Endothelial cell of umbilical vein (primary cell): ENCODE measurements at regions of chr12 and their contacts with region 1.

Region 1: GRCh38 chr12:49358483-49359141 is 8.7 kb upstream of the SPATS2 start:
- DNase-seq: peak; percentile 82
- H3K4me3 ChIP-seq: no peak overlapping the region
- H3K27ac ChIP-seq: no peak overlapping the region
- H3K4me1 ChIP-seq: no peaks in the 10 kb centered on the region
- H3K27me3 ChIP-seq: no peaks in the 10 kb centered on the region
- CTCF ChIP-seq: peak; percentile 74 to 76
- POLR2A ChIP-seq: no peak

Region 2: GRCh38 chr12:49288412-49288853 is 70.2 kb before region 1 on chr12:
- CTCF ChIA-PET with region 1: interaction called, 173 read pairs
- POLR2A ChIA-PET with region 1: no interaction called
- dilution Hi-C with region 1: no loop called
- intact Hi-C with region 1: loop called (anchors 1 kb)
- DNase-seq: peak; percentile 57
- H3K4me3 ChIP-seq: no peak overlapping the region
- H3K27ac ChIP-seq: no peak overlapping the region
- H3K4me1 ChIP-seq: peaks cover 2% of the 10 kb centered on the region
- H3K27me3 ChIP-seq: peaks cover 4 to 9% of the 10 kb centered on the region in 2 experiments
- CTCF ChIP-seq: peak; percentile 75 to 80
- POLR2A ChIP-seq: no peak

Region 3: GRCh38 chr12:49342066-49342913 is 16.3 kb before region 1 on chr12:
- CTCF ChIA-PET with region 1: interaction called, 157 read pairs
- POLR2A ChIA-PET with region 1: interaction called, 3 read pairs
- dilution Hi-C with region 1: no loop called
- intact Hi-C with region 1: no loop called
- DNase-seq: peak; percentile 76
- H3K4me3 ChIP-seq: peak overlapping the region in 2 of 3 experiments; percentile 24 to 25
- H3K27ac ChIP-seq: no peak overlapping the region
- H3K4me1 ChIP-seq: peaks cover 31% of the 10 kb centered on the region
- H3K27me3 ChIP-seq: peaks cover 50 to 71% of the 10 kb centered on the region in 2 experiments
- CTCF ChIP-seq: peak; percentile 92 to 94
- POLR2A ChIP-seq: no peak

Region 4: GRCh38 chr12:49428793-49429192 is 70.2 kb after region 1 on chr12:
- CTCF ChIA-PET with region 1: interaction called, 10 read pairs
- POLR2A ChIA-PET with region 1: no interaction called
- dilution Hi-C with region 1: no loop called
- intact Hi-C with region 1: no loop called
- DNase-seq: peak; percentile 27
- H3K4me3 ChIP-seq: no peak overlapping the region
- H3K27ac ChIP-seq: no peak overlapping the region
- H3K4me1 ChIP-seq: peaks cover 3% of the 10 kb centered on the region
- H3K27me3 ChIP-seq: no peaks in the 10 kb centered on the region
- CTCF ChIP-seq: no peak
- POLR2A ChIP-seq: no peak

Region 5: DNA sequence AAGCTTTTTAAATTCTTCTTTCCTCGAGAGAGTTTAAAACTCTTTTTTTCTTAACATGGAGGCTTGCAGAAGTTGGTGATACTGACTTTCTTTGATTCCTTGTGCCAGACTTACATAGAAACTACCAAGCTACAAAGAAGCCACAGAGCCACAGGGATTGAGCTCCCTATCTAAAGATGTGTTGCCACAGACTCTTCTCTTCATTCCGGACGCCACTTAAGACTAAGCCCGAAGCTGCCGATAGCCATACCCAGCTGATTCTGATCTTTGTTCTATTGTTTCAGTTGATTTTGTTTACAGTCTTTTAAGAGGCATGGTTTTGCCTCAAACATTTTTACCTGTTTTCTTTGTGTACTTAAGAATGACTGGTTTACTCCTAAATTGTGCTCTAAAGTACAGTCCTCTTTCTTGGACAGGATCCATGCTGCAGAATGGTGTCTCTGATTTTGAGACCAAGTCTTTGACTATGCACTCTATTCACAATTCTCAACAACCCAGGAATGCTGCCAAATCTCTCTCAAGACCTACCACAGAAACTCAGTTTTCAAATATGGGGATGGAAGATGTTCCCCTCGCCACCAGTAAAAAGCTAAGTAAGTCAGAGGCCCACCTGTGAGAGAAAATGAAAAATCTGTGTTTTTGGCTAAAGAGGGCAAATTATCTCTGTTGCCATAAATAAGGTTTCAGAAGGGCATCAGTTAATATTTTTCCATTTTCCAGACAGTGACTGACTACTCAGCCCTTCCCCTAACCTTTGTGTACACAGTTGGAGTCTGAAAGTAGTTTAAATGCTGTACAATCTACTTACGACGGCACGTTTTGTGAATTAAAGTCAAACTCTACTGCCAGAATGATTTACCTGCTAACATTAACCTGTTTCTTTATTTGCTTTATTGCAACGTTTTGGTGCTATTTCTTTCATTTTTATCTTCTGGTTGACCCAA is 138.1 kb after region 1 on chr12:
- CTCF ChIA-PET with region 1: interaction called, 21 read pairs
- POLR2A ChIA-PET with region 1: no interaction called
- dilution Hi-C with region 1: loop called (anchors 25 kb)
- intact Hi-C with region 1: no loop called
- DNase-seq: no peak
- H3K4me3 ChIP-seq: no peak overlapping the region
- H3K27ac ChIP-seq: no peak overlapping the region
- H3K4me1 ChIP-seq: peaks cover 8% of the 10 kb centered on the region
- H3K27me3 ChIP-seq: no peaks in the 10 kb centered on the region
- CTCF ChIP-seq: no peak
- POLR2A ChIP-seq: no peak

Region 6: DNA sequence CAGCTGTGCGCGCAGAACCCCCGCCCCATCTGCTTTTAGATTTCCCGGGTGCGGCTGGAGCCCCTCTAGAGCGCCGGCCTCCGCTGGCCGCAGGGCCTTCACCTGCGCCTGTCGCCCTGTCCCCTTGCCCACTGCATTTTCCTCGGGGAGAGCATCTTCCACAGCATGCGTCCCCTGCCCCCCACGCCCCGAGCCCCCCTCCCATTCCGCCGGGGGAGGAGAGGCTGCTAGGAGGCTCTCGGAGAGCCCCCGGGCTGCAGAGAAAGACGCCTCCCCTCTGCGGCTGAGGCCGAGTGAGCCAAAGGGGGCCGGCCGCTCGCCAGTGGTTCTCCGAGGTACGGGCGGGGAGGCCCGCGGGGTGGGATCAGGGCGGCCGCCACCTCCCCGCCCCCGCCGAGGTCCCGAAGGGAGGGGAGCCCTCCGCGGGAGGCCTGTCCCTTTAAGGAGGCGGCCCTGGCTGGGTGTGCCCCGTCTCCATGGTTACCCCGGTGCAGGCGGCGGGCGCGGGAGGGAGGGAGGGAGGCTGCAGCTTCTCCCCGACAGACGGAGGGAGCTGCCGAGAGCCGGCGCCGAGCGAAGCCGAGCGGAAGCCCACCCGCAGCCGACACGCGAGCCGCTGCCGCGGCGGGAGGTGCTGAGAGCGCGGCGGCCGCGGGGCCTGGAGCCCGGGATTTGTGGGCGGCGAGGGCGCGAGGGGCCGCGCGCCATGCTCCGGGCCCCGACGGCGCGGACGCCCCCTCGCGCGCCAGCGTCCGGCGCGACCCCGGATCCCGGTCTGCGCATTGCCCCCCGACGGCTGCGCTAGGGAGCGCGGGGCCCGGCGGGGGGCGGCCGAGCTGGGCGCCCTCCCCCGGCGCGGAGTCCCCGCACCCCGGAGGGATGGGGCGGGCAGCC is 180.1 kb after region 1 on chr12 and contains the start of gene KCNH3:
- CTCF ChIA-PET with region 1: interaction called, 43 read pairs
- POLR2A ChIA-PET with region 1: no interaction called
- dilution Hi-C with region 1: no loop called
- intact Hi-C with region 1: no loop called
- DNase-seq: peak; percentile 29
- H3K4me3 ChIP-seq: peak within 1 kb of the TSS in 1 of 3 experiments; percentile 17
- H3K27ac ChIP-seq: no peak within 1 kb of the TSS
- H3K4me1 ChIP-seq: peaks cover 8% of the 10 kb centered on the region
- H3K27me3 ChIP-seq: peaks cover 20 to 35% of the 10 kb centered on the region in 2 experiments
- CTCF ChIP-seq: no peak
- POLR2A ChIP-seq: no peak
- total RNA-seq, gene KCNH3: 0.13 and 0.18 TPM in 2 replicates

Region 7: DNA sequence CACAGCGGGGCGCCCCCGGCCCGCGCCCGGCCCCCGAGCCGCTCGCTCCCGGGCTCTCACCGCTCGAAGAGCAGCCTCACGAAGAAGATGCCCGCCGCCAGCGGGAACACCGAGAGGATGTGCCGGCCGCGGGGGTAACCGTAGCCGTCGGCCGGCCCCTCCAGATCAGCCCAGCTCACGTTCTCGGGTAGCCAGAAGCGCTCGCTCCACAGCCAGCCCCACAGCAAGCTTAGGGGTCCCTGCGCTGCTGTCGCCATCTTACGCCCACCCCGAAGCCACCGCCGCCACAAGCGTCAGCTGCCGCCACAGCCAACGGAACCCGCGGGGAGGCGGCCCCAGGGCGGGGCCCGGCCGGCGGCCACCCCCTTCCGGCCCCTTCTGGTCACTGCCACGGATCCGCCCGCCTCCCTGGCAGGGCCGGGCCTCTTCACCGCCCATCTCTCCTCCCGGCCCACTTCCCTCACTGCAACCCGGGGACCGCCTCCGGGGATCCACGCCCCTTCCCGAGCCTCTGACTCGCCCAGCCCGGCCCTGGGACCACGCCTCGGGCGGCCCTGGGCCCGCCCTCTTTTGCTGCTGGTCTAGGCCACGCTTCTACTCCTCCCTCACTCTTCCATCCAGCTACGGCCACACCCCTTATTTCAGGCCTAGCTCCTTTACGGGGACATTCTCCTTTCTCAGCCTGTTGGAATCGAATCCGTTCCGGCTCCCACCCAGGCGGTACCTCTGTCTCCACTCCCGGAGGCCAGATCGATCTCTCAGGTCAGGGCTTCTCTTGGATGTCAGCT is 808.6 kb after region 1 on chr12 and contains the start of gene CERS5:
- CTCF ChIA-PET with region 1: no interaction called
- POLR2A ChIA-PET with region 1: no interaction called
- dilution Hi-C with region 1: no loop called
- intact Hi-C with region 1: no loop called
- DNase-seq: peak; percentile 99
- H3K4me3 ChIP-seq: peak within 1 kb of the TSS; percentile 92 to 98 (median 93)
- H3K27ac ChIP-seq: peak within 1 kb of the TSS; percentile 75
- H3K4me1 ChIP-seq: peaks cover 7% of the 10 kb centered on the region
- H3K27me3 ChIP-seq: no peaks in the 10 kb centered on the region
- CTCF ChIP-seq: no peak
- POLR2A ChIP-seq: peak; percentile 91
- total RNA-seq, gene CERS5: 60.4 and 66.4 TPM in 2 replicates